ENCODE measurements at regions of chr2 and their contacts with region 1.

Region 1: DNA sequence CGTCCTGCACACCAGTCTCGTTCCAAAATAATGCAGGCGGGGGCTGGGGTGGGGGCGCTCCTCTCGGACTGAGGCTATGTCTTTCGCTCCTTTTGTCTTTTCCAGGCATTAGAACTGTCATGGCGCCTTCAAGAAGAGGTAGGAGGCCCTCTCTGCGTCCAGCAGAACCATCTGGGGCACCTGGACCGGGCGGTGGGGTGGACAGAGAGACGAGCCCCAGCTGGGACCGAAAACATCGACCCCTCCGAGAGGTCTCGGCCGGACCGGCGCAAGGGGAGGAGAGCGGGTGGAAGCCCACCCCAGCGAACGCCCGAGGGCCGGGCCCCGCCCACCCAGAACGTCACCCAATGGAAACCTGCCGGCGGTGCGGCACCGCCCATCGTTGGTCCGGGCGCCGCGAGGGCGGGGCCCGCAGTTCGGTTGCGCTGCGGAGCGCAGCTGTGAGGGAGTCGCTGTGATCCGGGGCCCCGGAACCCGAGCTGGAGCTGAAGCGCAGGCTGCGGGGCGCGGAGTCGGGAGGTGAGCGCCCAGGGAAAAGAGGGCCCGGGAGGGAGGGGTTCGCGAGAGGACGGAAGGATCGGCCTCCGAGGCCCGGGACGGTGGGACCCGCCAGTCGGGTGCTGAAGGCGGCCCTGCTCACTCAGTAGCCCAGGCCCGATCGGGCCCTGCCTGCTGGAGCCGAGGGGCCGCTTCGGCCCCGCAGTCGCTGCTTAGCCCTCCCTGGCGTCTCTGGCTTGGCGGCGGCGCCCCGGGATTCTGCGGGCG is at the start of gene NRBP1:
- DNase-seq: peak; percentile 87
- H3K4me3 Mint-ChIP-seq: peak within 1 kb of the TSS; percentile 94
- H3K27ac Mint-ChIP-seq: peak within 1 kb of the TSS; percentile 94
- H3K4me1 Mint-ChIP-seq: peaks cover 15% of the 10 kb centered on the region
- H3K27me3 Mint-ChIP-seq: no peaks in the 10 kb centered on the region
- CTCF ChIP-seq: no peak
- total RNA-seq, gene NRBP1: 79.5 and 97.3 TPM in 2 replicates

Region 2: GRCh38 chr2:27255660-27256059 is 172.7 kb before region 1 on chr2:
- CTCF ChIA-PET with region 1: no interaction called
- POLR2A ChIA-PET with region 1: no interaction called
- intact Hi-C with region 1: no loop called
- DNase-seq: peak; percentile 48
- H3K4me3 Mint-ChIP-seq: no peak overlapping the region
- H3K27ac Mint-ChIP-seq: no peak overlapping the region
- H3K4me1 Mint-ChIP-seq: peaks cover 20% of the 10 kb centered on the region
- H3K27me3 Mint-ChIP-seq: peaks cover 15% of the 10 kb centered on the region
- CTCF ChIP-seq: no peak

Region 3: DNA sequence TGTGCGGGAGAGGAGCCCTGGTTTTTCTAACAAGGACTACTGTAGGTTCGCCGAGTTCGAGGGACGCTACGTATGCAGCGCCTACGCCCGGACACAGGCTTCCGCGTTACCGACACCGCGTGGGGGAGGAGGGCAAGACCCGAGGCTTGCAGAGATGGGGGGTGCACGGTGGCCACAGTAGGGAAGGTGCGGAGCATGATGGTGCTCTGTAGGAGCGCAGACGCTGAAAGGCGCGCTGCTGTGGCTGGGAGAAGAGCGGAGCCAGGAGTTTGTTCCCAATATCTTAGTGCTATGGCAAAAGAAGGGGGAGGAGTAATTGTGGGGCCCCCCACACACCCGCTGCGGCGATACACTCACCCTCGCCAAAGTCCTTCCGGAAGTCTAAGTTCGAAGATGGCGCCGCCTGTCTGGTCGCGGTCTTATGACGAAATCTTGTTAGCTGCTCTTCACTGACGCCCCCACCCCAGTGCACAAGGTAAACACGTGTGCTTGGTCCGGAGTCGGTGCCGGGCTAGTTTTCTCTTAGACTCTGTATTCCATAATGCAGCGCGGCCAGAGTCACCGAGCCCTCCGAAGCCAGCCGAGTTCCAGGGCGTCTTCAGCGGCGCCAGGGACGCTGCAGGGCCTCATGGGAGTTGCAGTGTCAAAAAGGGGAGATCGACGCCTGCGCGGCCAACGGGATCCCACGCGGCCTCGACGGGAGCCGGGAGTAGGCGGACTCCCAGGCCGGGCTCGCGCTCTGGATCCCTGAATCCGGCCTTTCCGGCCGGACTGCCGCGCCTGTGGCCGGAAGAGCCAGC is 71.8 kb before region 1 on chr2 and contains the start of gene GTF3C2:
- CTCF ChIA-PET with region 1: no interaction called
- POLR2A ChIA-PET with region 1: interaction called, 19 read pairs
- intact Hi-C with region 1: no loop called
- DNase-seq: peak; percentile 97
- H3K4me3 Mint-ChIP-seq: peak within 1 kb of the TSS; percentile 90
- H3K27ac Mint-ChIP-seq: peak within 1 kb of the TSS; percentile 93
- H3K4me1 Mint-ChIP-seq: peaks cover 31% of the 10 kb centered on the region
- H3K27me3 Mint-ChIP-seq: no peaks in the 10 kb centered on the region
- CTCF ChIP-seq: no peak
- total RNA-seq, gene GTF3C2: 47.5 and 47.8 TPM in 2 replicates

Region 4: GRCh38 chr2:27370026-27370815 is 58.2 kb before region 1 on chr2 and contains the starts of genes EIF2B4 and SNX17:
- CTCF ChIA-PET with region 1: interaction called, 9 read pairs
- POLR2A ChIA-PET with region 1: interaction called, 22 read pairs
- intact Hi-C with region 1: no loop called
- DNase-seq: peak; percentile 99
- H3K4me3 Mint-ChIP-seq: peak within 1 kb of the TSS; percentile 86
- H3K27ac Mint-ChIP-seq: peak within 1 kb of the TSS; percentile 81
- H3K4me1 Mint-ChIP-seq: peaks cover 21% of the 10 kb centered on the region
- H3K27me3 Mint-ChIP-seq: no peaks in the 10 kb centered on the region
- CTCF ChIP-seq: peak; percentile 69
- total RNA-seq, gene EIF2B4: 42.7 and 50.1 TPM in 2 replicates
- total RNA-seq, gene SNX17: 101 and 125 TPM in 2 replicates

Region 5: GRCh38 chr2:27380626-27381545 is 47.5 kb before region 1 on chr2 and contains the start of gene ZNF513:
- CTCF ChIA-PET with region 1: interaction called, 7 read pairs
- POLR2A ChIA-PET with region 1: interaction called, 33 read pairs
- intact Hi-C with region 1: no loop called
- DNase-seq: peak; percentile 95
- H3K4me3 Mint-ChIP-seq: peak within 1 kb of the TSS; percentile 84
- H3K27ac Mint-ChIP-seq: peak within 1 kb of the TSS; percentile 93
- H3K4me1 Mint-ChIP-seq: peaks cover 20% of the 10 kb centered on the region
- H3K27me3 Mint-ChIP-seq: no peaks in the 10 kb centered on the region
- CTCF ChIP-seq: no peak
- total RNA-seq, gene ZNF513: 14.8 and 16.2 TPM in 2 replicates

Region 6: DNA sequence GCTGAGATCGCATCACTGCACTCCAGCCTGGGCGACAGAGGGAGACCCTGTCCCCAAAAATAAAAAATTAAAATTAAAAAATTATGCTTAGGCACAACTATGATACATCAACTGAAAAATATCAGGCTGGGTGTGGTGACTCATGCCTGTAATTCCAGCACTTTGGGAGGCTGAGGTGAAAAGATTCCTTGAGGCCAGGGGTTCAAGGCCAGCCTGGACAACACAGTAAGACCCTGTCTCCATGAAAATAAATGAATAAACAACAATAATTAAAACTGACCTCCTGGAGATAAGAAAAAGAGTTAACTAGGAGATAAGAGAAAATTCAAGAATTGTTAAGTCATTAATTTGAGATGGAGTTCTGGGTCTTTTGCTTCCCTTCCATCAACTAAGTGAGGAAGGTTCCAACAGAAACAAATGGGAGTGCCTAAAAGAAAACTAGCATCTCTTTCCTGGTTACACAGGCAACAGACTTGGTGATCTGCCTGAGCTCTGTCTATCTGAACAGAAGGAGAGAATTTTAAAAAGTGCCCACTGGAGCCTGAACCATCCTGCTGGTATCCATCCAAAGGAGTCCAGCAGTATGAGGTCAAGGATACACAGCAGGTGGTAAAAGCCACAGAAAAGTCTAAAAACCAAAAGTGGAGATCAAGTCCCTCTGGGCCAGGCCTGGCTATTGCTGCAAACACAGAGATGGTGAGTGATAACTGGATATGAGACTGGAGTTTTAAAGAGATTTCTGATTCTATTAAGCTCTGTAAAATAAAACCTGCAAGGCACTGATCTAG is 27.9 kb before region 1 on chr2:
- CTCF ChIA-PET with region 1: interaction called, 5 read pairs
- POLR2A ChIA-PET with region 1: interaction called, 205 read pairs
- intact Hi-C with region 1: no loop called
- DNase-seq: no peak
- H3K4me3 Mint-ChIP-seq: no peak overlapping the region
- H3K27ac Mint-ChIP-seq: no peak overlapping the region
- H3K4me1 Mint-ChIP-seq: peaks cover 9% of the 10 kb centered on the region
- H3K27me3 Mint-ChIP-seq: no peaks in the 10 kb centered on the region
- CTCF ChIP-seq: no peak

Region 7: DNA sequence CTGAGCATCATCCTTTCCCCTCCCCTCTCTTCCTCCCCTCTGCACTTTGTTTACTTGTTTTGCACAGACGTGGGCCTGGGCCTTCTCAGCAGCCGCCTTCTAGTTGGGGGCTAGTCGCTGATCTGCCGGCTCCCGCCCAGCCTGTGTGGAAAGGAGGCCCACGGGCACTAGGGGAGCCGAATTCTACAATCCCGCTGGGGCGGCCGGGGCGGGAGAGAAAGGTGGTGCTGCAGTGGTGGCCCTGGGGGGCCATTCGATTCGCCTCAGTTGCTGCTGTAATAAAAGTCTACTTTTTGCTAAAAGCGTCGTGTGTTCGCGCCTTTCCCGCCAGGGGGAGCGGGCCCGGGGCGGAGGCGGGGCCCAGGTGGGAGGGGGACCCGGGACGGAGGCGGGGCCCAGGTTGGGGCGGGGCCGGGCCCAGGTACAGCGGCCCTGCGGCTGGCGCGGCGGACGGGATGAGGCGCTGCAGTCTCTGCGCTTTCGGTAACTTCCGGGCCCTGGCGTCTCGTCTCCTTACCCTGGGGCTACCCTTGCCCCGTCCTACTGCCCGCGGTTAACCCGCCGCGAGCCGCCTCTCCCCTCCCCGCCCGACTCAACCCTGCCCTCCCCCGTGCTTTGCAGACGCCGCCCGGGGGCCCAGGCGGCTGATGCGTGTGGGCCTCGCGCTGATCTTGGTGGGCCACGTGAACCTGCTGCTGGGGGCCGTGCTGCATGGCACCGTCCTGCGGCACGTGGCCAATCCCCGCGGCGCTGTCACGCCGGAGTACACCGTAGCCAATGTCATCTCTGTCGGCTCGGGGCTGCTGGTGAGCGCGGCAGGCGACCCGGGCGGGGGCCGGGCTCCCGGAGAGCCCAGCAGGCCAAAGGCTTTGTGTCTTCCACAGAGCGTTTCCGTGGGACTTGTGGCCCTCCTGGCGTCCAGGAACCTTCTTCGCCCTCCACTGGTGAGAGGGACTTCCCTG is 13.8 kb after region 1 on chr2 and contains the start of gene KRTCAP3:
- CTCF ChIA-PET with region 1: interaction called, 4 read pairs
- POLR2A ChIA-PET with region 1: interaction called, 51 read pairs
- intact Hi-C with region 1: no loop called
- DNase-seq: peak; percentile 35
- H3K4me3 Mint-ChIP-seq: no peak within 1 kb of the TSS
- H3K27ac Mint-ChIP-seq: peak within 1 kb of the TSS; percentile 12
- H3K4me1 Mint-ChIP-seq: peaks cover 9% of the 10 kb centered on the region
- H3K27me3 Mint-ChIP-seq: no peaks in the 10 kb centered on the region
- CTCF ChIP-seq: no peak
- total RNA-seq, gene KRTCAP3: 4.1 and 6.9 TPM in 2 replicates

Region 8: GRCh38 chr2:27582695-27583389 is 154.4 kb after region 1 on chr2 and contains the start of gene ZNF512:
- CTCF ChIA-PET with region 1: no interaction called
- POLR2A ChIA-PET with region 1: interaction called, 9 read pairs
- intact Hi-C with region 1: loop called (anchors 2 kb)
- DNase-seq: peak; percentile 94
- H3K4me3 Mint-ChIP-seq: peak within 1 kb of the TSS; percentile 97
- H3K27ac Mint-ChIP-seq: peak within 1 kb of the TSS; percentile 97
- H3K4me1 Mint-ChIP-seq: peaks cover 39% of the 10 kb centered on the region
- H3K27me3 Mint-ChIP-seq: no peaks in the 10 kb centered on the region
- CTCF ChIP-seq: no peak
- total RNA-seq, gene ZNF512: 19.9 and 25.5 TPM in 2 replicates

Region 9: GRCh38 chr2:27735263-27735953 is 307.0 kb after region 1 on chr2:
- CTCF ChIA-PET with region 1: no interaction called
- POLR2A ChIA-PET with region 1: no interaction called
- intact Hi-C with region 1: no loop called
- DNase-seq: peak; percentile 71
- H3K4me3 Mint-ChIP-seq: no peak overlapping the region
- H3K27ac Mint-ChIP-seq: no peak overlapping the region
- H3K4me1 Mint-ChIP-seq: peaks cover 8% of the 10 kb centered on the region
- H3K27me3 Mint-ChIP-seq: no peaks in the 10 kb centered on the region
- CTCF ChIP-seq: no peak

Measured in MCF 10A (cell line).